H1 (cell line): ENCODE measurements at regions of chr6 and their contacts with region 1.

Region 1: DNA sequence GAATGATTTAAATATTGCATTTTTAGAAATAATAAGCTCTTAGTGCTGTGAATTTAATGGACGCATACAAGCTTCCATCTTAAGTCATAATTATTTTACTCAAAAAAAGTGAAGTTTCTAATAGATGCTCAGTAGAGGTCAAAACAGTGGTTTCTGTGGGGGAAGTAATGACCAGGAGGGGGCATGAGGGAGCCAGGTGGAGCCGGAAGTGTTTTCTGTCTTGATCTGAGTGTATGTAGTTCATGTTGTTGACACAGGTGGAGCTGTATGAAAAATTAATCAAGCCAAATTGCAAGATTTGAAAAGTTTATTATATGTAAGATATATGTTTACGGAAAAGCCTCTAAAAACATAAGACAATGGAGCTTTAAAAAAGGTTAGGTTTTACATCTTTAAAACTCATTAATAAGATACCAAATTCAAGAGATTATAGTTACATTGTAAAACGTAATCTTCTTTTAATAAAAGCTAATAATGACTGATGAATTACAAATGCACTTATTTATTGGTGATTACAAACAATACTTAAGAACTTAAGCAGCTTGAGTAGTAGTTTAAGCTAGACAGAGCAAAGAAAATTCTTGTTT is 68.0 kb downstream of the PLAGL1 start:
- DNase-seq: no peak
- H3K4me3 ChIP-seq: no peak overlapping the region
- H3K27ac ChIP-seq: no peak overlapping the region
- H3K4me1 ChIP-seq: peaks cover 2 to 18% (median 9%) of the 10 kb centered on the region in 4 experiments; a peak in 5 of 7 replicates
- H3K27me3 ChIP-seq: no peaks in the 10 kb centered on the region; a peak in 1 of 7 replicates
- CTCF ChIP-seq: peak; percentile 70 to 98 (median 79)
- EP300 ChIP-seq: no peak
- POLR2A ChIP-seq: no peak
- RAD21 ChIP-seq: peak; percentile 68 to 77

Region 2: GRCh38 chr6:143884216-143884900 is 55.7 kb before region 1 on chr6:
- CTCF ChIA-PET with region 1: interaction called, 19 read pairs
- POLR2A ChIA-PET with region 1: no interaction called
- DNase-seq: no peak
- H3K4me3 ChIP-seq: no peak overlapping the region
- H3K27ac ChIP-seq: no peak overlapping the region
- H3K4me1 ChIP-seq: no peaks in the 10 kb centered on the region
- H3K27me3 ChIP-seq: no peaks in the 10 kb centered on the region
- CTCF ChIP-seq: no peak
- EP300 ChIP-seq: no peak
- POLR2A ChIP-seq: no peak
- RAD21 ChIP-seq: no peak

Region 3: DNA sequence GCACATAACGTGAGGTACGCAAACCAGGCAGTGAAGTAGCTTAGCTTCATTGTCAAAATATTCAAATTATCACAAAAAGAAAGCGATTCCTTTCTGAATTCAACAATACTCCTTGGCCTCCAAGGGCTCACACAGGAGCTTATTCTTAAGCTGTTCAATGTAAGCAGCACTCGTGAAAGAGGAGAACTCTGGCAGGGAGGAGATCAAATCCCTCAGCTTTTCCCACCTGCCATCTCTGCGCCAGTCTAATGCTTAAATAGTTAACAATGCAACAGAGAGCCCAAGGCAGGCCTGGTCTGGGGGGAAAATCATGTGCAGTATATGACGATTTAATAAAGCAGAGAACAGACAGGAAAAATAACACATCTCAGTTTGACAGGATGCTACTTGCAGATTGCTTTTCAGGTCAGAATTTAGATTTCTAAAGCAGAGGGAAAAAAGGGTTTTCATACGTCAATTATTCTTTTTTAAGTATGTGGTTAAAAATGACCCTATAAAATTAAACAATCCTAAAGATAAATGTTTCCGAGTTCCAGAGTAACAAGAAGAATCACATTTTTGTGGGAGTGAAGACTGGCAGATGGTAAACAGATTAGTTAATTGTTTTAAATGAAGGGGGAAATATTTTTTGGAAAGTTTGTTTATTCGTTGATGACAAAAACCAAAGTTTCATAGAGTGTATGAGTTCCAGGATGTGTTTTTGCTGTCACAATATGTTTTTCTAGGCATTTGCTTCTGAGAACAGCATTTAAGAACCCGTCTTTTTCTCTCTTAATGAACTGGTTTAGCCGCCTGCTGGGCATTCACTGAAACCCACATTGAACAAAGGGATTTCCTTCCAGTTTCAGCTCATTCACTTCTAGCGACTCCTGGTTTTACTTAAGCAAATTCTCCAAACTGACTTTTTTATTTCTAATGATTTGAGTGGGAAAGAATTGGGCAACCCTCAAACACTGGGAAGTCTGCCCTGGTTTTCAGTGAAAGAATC is 22.1 kb after region 1 on chr6:
- CTCF ChIA-PET with region 1: interaction called, 591 read pairs
- POLR2A ChIA-PET with region 1: interaction called, 14 read pairs
- DNase-seq: no peak
- H3K4me3 ChIP-seq: peak overlapping the region in 1 of 4 experiments; percentile 33; a peak in 3 of 8 replicates
- H3K27ac ChIP-seq: no peak overlapping the region
- H3K4me1 ChIP-seq: peaks cover 21 to 72% (median 47%) of the 10 kb centered on the region in 4 experiments
- H3K27me3 ChIP-seq: peaks cover 67 to 98% (median 89%) of the 10 kb centered on the region in 4 experiments
- CTCF ChIP-seq: peak in 2 of 3 experiments; percentile 41 to 49; a peak in 3 of 4 replicates
- EP300 ChIP-seq: no peak
- POLR2A ChIP-seq: no peak
- RAD21 ChIP-seq: peak in 1 of 2 experiments; percentile 43; a peak in 2 of 4 replicates

Region 4: DNA sequence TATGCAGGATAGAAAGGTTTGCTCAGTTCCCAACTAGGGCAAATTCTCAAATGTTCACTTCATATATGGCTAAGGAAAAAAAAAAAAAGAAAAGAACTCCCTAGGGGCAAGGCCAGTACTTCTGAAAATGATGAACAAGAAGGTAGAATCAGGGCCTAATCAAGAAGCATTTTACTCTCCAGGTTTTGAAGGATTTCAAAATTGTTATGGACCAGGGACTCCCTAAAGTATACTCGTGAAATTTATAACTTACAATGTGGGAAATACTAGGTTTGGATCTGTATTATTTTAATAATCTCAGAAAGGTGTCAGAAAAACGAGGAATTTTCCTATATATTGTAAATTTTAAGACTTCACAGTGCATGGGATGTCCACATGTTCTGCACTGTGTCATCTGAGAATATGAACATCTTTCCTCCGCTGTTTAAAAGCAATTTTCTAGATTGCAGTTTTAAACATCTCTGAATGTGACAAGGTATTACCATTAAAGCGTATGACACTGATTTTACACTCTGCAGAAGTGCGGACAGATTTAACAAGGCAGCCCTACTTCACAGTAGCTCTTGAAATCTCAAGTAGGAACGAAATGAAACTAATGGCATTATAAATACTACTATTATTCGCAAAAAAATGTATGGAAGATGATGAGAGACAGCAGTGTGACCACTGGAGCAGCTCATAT is 54.0 kb after region 1 on chr6:
- CTCF ChIA-PET with region 1: interaction called, 12 read pairs
- POLR2A ChIA-PET with region 1: no interaction called
- DNase-seq: no peak
- H3K4me3 ChIP-seq: no peak overlapping the region
- H3K27ac ChIP-seq: no peak overlapping the region
- H3K4me1 ChIP-seq: no peaks in the 10 kb centered on the region
- H3K27me3 ChIP-seq: no peaks in the 10 kb centered on the region
- CTCF ChIP-seq: no peak
- EP300 ChIP-seq: no peak
- POLR2A ChIP-seq: no peak
- RAD21 ChIP-seq: no peak

Region 5: DNA sequence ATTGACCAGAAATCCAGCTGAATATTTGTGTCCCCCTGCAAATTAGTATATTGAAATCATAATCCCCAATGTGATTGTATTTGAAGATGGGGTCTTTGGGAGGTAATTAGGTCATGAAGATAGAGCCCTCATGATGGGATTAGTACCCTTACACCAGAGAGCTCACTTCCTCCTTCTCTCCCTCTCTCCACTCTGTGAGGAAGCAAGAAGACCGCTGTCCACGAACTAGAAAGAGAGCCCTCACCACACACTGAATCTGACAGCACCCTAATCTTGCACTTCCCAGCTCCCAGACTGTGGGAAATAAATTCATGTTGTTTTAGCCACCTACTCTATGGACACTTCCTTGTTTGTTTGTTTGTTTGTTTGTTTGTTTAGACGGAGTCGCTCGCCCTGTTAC is 79.8 kb after region 1 on chr6:
- CTCF ChIA-PET with region 1: interaction called, 366 read pairs
- POLR2A ChIA-PET with region 1: no interaction called
- DNase-seq: no peak
- H3K4me3 ChIP-seq: no peak overlapping the region
- H3K27ac ChIP-seq: no peak overlapping the region
- H3K4me1 ChIP-seq: no peaks in the 10 kb centered on the region
- H3K27me3 ChIP-seq: no peaks in the 10 kb centered on the region
- CTCF ChIP-seq: no peak
- EP300 ChIP-seq: no peak
- POLR2A ChIP-seq: no peak
- RAD21 ChIP-seq: no peak

Region 6: DNA sequence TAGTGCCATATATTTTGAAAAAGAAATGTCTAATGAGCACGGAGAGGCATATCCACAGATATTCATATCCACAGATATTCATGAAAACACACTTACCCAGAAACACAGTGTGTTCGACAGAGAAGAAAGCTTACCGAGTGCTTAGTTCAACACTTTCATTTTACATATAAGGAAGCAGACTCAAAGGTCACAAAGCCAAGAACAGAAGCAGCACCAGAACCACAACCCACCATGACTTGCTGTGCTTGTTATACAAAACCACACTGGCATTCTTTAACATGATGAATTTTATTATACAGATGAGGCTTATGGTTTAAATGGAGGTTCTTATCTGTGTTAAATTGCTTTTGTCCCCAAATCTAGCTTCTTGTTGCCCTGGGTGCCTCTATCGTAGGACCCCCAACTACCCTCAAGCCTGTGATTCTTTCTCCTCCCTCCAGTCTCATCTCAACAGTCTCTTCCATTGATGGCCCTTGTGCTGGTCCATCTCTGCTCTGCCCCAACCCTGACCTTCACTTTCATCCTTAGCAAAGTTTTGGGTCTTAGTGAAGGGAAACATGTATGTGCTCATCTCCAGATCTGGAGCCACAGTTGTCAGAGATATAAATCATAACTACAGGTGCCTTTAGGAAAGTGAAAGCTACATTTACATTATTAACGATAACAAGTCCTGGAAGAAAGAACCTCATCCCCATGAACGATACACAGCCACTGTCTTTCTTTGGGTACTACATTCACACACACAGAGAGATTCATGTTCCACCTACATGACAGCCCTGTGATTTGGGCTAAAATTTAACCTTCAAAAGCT is 115.2 kb after region 1 on chr6:
- CTCF ChIA-PET with region 1: interaction called, 13 read pairs
- POLR2A ChIA-PET with region 1: no interaction called
- DNase-seq: no peak
- H3K4me3 ChIP-seq: no peak overlapping the region
- H3K27ac ChIP-seq: no peak overlapping the region
- H3K4me1 ChIP-seq: no peaks in the 10 kb centered on the region
- H3K27me3 ChIP-seq: peaks cover 0 to 1% (median 0%) of the 10 kb centered on the region in 4 experiments; a peak in 1 of 7 replicates
- CTCF ChIP-seq: no peak
- EP300 ChIP-seq: no peak
- POLR2A ChIP-seq: no peak
- RAD21 ChIP-seq: no peak